CD4-positive, alpha-beta memory T cell (primary cell): ENCODE measurements at regions of chr17 and their contacts with region 1.

Region 1: DNA sequence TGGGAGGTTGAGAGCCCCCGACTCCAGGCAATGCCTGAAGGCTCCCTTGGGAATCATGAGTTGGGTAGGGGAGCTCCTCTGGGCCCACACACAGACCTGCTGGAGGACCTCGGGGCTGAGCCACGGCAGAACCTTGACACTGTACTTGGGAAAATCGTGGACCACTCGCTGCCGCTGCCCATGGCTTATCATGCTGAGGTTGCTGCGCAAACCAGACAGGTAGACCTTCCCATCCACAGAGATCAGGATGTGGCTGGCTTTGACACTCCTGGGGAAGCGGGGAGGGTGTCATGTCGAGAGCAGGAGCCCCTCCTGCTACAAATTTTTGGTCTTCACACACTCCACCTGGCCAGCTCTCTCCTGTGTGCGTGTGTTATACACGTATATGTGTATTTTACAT is 7.2 kb upstream of the LIMD2 start:
- DNase-seq: peak; percentile 33 to 70 (median 41)
- H3K4me3 ChIP-seq: peak overlapping the region; percentile 21 to 34
- H3K4me3 Mint-ChIP-seq: peak overlapping the region; percentile 77 to 89 (median 80)
- H3K27ac ChIP-seq: peak overlapping the region; percentile 51
- H3K27ac Mint-ChIP-seq: peak overlapping the region; percentile 85 to 100 (median 93)
- H3K4me1 ChIP-seq: peaks cover 88% of the 10 kb centered on the region
- H3K4me1 Mint-ChIP-seq: peaks cover 52 to 83% (median 73%) of the 10 kb centered on the region in 4 donors
- H3K27me3 ChIP-seq: no peaks in the 10 kb centered on the region
- H3K27me3 Mint-ChIP-seq: no peaks in the 10 kb centered on the region

Region 2: DNA sequence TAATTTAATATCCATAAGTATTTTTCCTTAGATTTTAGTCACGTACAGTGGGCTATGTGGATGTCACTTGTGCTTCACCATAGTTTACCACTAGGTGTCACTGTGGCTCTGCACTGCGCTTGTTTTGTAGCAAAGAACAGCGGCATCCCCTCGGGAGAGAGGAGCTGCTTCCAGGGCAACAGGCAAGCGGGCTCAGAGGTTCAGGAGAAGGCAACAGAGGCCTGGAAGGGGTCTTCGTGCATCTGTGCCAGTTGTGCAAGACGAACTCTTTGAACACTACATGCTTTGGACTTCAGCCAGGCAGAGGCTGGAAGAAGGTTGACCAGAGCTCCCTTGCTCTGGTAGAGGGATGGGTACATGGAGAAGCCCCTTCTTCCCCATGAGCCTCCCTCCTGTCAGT is 281.7 kb before region 1 on chr17:
- CTCF ChIA-PET with region 1: interaction called, 30 read pairs
- POLR2A ChIA-PET with region 1: interaction called, 11 read pairs
- intact Hi-C with region 1: loop called (anchors 1 kb)
- DNase-seq: peak; percentile 68 to 74 (median 72)
- H3K4me3 ChIP-seq: no peak overlapping the region
- H3K4me3 Mint-ChIP-seq: peak overlapping the region; percentile 32 to 82 (median 48)
- H3K27ac ChIP-seq: no peak overlapping the region
- H3K27ac Mint-ChIP-seq: peak overlapping the region in 5 of 7 donors; percentile 47 to 87 (median 67)
- H3K4me1 ChIP-seq: peaks cover 49% of the 10 kb centered on the region
- H3K4me1 Mint-ChIP-seq: peaks cover 26 to 54% (median 44%) of the 10 kb centered on the region in 4 donors
- H3K27me3 ChIP-seq: no peaks in the 10 kb centered on the region
- H3K27me3 Mint-ChIP-seq: no peaks in the 10 kb centered on the region

Region 3: DNA sequence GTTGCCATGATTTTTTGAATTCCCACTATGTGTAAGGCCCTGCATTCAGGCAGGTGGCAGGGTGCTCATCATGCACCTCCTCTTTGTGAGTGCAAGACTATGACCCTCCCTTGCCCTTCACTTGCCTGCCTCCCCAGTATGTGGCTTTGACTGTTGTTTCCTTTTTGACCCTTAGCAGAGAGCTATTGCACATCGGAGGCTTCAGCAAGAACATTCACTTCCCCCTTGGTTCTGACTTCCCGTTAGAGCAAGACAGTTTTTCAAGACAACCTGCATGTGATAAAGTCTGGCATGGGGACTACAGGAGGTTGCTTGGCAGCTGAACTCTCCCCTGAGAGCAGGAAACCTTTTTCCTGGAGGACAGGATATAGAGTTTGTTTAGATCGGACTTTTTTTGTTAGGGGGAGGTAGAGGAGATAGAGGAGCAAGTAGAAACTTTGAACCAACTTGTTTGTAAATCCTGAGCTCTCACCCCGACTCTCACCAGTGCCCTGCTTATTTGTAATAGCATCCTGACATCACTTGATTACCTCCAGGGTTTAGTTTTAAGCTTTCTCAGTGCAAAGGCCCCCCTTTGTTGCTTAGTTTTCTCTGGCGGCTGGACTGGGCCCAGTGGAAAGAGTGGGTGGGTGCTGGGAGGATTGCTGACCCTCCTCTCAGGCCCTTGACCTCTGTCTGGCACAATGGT is 41.5 kb before region 1 on chr17:
- CTCF ChIA-PET with region 1: interaction called, 12 read pairs
- POLR2A ChIA-PET with region 1: interaction called, 5 read pairs
- intact Hi-C with region 1: no loop called
- DNase-seq: no peak
- H3K4me3 ChIP-seq: no peak overlapping the region
- H3K4me3 Mint-ChIP-seq: no peak overlapping the region
- H3K27ac ChIP-seq: no peak overlapping the region
- H3K27ac Mint-ChIP-seq: peak overlapping the region in 4 of 7 donors; percentile 30 to 69 (median 40)
- H3K4me1 ChIP-seq: no peaks in the 10 kb centered on the region
- H3K4me1 Mint-ChIP-seq: peaks cover 5 to 15% (median 10%) of the 10 kb centered on the region in 4 donors
- H3K27me3 ChIP-seq: no peaks in the 10 kb centered on the region
- H3K27me3 Mint-ChIP-seq: no peaks in the 10 kb centered on the region

Region 4: DNA sequence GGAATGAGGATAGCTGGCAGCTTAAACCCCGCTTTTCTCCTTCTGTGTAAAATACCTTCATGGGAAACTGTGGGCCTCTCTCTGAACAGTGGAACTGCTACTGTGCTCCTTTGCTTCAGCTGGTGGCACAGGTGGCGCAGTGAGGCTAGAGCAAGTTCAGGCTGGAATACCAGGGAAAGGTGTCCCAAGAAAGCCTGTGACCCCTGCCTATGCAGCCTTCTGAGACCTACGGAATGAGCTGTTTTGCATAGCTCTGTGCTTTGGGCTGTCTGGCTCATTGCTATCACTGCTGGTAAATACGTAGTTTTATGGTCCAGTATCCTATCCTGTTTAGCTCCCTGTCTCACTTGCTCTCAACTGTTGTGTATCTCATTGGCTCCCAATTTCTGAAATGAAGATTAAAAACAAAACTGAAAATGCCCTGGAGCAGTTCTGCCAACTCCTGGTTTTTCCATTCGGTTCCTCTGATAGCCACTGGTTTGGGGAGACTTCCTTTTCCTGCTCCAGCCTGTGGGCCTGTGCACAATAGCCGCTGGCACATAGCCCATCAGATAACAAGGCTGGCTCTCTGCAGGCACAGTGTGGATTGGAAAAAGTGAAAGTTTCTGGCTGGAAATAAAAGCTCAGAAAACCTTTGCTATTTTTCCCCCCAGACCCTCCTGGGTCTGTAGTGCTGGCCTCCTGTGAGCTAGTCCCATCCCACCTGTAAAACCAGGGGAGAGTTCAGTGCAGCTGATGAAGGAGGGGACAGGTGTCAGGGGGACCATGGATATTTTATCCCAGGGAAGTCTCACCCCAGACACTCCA is 31.3 kb before region 1 on chr17:
- CTCF ChIA-PET with region 1: interaction called, 21 read pairs
- POLR2A ChIA-PET with region 1: interaction called, 6 read pairs
- intact Hi-C with region 1: no loop called
- DNase-seq: no peak
- H3K4me3 ChIP-seq: no peak overlapping the region
- H3K4me3 Mint-ChIP-seq: no peak overlapping the region
- H3K27ac ChIP-seq: no peak overlapping the region
- H3K27ac Mint-ChIP-seq: peak overlapping the region in 6 of 7 donors; percentile 17 to 84 (median 60)
- H3K4me1 ChIP-seq: peaks cover 10% of the 10 kb centered on the region
- H3K4me1 Mint-ChIP-seq: peaks cover 10 to 24% (median 16%) of the 10 kb centered on the region in 4 donors
- H3K27me3 ChIP-seq: no peaks in the 10 kb centered on the region
- H3K27me3 Mint-ChIP-seq: no peaks in the 10 kb centered on the region

Region 5: GRCh38 chr17:63685041-63685440 is 22.1 kb before region 1 on chr17:
- CTCF ChIA-PET with region 1: interaction called, 18 read pairs
- POLR2A ChIA-PET with region 1: interaction called, 1,362 read pairs
- intact Hi-C with region 1: no loop called
- DNase-seq: no peak
- H3K4me3 ChIP-seq: no peak overlapping the region
- H3K4me3 Mint-ChIP-seq: no peak overlapping the region
- H3K27ac ChIP-seq: no peak overlapping the region
- H3K27ac Mint-ChIP-seq: peak overlapping the region in 3 of 7 donors; percentile 32 to 80 (median 53)
- H3K4me1 ChIP-seq: no peaks in the 10 kb centered on the region
- H3K4me1 Mint-ChIP-seq: peaks cover 0 to 9% (median 1%) of the 10 kb centered on the region in 4 donors
- H3K27me3 ChIP-seq: no peaks in the 10 kb centered on the region
- H3K27me3 Mint-ChIP-seq: no peaks in the 10 kb centered on the region

Region 6: DNA sequence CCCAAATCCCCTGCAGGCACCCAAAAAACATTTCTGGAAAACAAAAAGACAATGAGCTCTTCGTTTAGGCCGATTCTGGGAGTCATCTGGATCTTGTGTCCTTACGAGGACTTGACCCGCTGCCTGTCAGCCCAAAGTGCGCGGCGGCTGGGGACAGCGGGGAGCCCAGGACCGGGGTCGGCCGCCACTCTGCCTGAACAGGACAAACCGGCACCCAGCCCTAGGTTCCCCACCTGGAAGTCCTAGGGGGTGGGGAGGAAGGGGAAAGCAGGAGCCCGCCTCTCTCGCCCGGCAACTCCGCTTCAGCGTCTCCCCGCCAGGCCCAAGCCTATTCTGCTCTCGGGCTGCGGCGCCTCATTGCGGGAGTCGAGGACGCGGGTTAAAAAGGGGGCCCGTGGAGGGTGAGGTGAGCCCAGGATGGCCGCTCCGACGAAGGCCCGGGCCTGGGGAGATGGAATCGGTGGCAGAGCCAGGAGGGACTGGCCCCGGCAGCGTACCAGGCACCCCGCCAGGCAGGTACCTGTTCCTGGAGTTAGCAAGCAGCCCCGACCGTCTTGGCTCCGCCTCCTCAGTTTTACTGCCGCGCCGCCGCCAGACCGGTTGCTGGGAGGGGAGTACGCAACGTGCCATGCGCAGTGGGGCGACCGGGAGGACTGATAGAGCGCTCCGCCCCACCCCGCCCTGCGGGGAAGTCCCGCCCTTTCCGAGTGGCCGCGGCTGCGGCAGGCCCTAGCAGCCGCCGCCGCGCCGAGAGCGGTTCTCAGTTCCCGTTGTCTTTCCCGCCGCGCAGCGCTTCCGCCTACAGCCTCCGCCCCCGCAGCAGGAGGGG is 34.3 kb after region 1 on chr17 and contains the start of gene STRADA:
- CTCF ChIA-PET with region 1: interaction called, 16 read pairs
- POLR2A ChIA-PET with region 1: interaction called, 364 read pairs
- intact Hi-C with region 1: loop called (anchors 1 kb)
- DNase-seq: peak; percentile 97 to 99 (median 99)
- H3K4me3 ChIP-seq: peak within 1 kb of the TSS; percentile 78 to 81
- H3K4me3 Mint-ChIP-seq: peak within 1 kb of the TSS; percentile 87 to 96 (median 92)
- H3K27ac ChIP-seq: peak within 1 kb of the TSS; percentile 88
- H3K27ac Mint-ChIP-seq: peak within 1 kb of the TSS; percentile 88 to 98 (median 97)
- H3K4me1 ChIP-seq: peaks cover 14% of the 10 kb centered on the region
- H3K4me1 Mint-ChIP-seq: peaks cover 14 to 32% (median 24%) of the 10 kb centered on the region in 4 donors
- H3K27me3 ChIP-seq: no peaks in the 10 kb centered on the region
- H3K27me3 Mint-ChIP-seq: no peaks in the 10 kb centered on the region
- total RNA-seq, gene STRADA: 55.6 to 58.3 TPM

Region 7: GRCh38 chr17:63773381-63774140 is 66.4 kb after region 1 on chr17 and contains the start of gene CCDC47:
- CTCF ChIA-PET with region 1: interaction called, 11 read pairs
- POLR2A ChIA-PET with region 1: interaction called, 111 read pairs
- intact Hi-C with region 1: loop called (anchors 1 kb)
- DNase-seq: peak; percentile 99
- H3K4me3 ChIP-seq: peak within 1 kb of the TSS; percentile 87 to 97
- H3K4me3 Mint-ChIP-seq: peak within 1 kb of the TSS; percentile 91 to 100 (median 99)
- H3K27ac ChIP-seq: peak within 1 kb of the TSS; percentile 99
- H3K27ac Mint-ChIP-seq: peak within 1 kb of the TSS; percentile 99 to 100 (median 100)
- H3K4me1 ChIP-seq: peaks cover 66% of the 10 kb centered on the region
- H3K4me1 Mint-ChIP-seq: peaks cover 33 to 81% (median 52%) of the 10 kb centered on the region in 4 donors
- H3K27me3 ChIP-seq: no peaks in the 10 kb centered on the region
- H3K27me3 Mint-ChIP-seq: no peaks in the 10 kb centered on the region
- total RNA-seq, gene CCDC47: 36.7 to 39.0 TPM